ENCODE measurements at regions of chr17 and their contacts with region 1.

Region 1: GRCh38 chr17:18033442-18034099 is 5.4 kb downstream of the ATPAF2 start:
- DNase-seq: peak in 8 of 9 experiments; percentile 28 to 88 (median 56)
- ATAC-seq: peak; percentile 94
- H3K4me3 ChIP-seq: no peak overlapping the region
- H3K4me3 Mint-ChIP-seq: no peak overlapping the region
- H3K27ac ChIP-seq: no peak overlapping the region
- H3K27ac Mint-ChIP-seq: no peak overlapping the region
- H3K4me1 ChIP-seq: peaks cover 18% of the 10 kb centered on the region
- H3K4me1 Mint-ChIP-seq: peaks cover 28% of the 10 kb centered on the region
- H3K27me3 ChIP-seq: no peaks in the 10 kb centered on the region
- H3K27me3 Mint-ChIP-seq: no peaks in the 10 kb centered on the region
- CTCF ChIP-seq: peak; percentile 62

Region 2: GRCh38 chr17:17356149-17356930 is 677.2 kb before region 1 on chr17:
- CTCF ChIA-PET with region 1: no interaction called
- POLR2A ChIA-PET with region 1: no interaction called
- intact Hi-C with region 1: loop called (anchors 1 to 2 kb)
- DNase-seq: peak; percentile 41 to 83 (median 68)
- ATAC-seq: peak; percentile 89
- H3K4me3 ChIP-seq: no peak overlapping the region
- H3K4me3 Mint-ChIP-seq: no peak overlapping the region
- H3K27ac ChIP-seq: no peak overlapping the region
- H3K27ac Mint-ChIP-seq: no peak overlapping the region
- H3K4me1 ChIP-seq: no peaks in the 10 kb centered on the region
- H3K4me1 Mint-ChIP-seq: peaks cover 4% of the 10 kb centered on the region
- H3K27me3 ChIP-seq: no peaks in the 10 kb centered on the region
- H3K27me3 Mint-ChIP-seq: no peaks in the 10 kb centered on the region
- CTCF ChIP-seq: peak; percentile 99

Region 3: GRCh38 chr17:17681187-17681848 is 352.3 kb before region 1 on chr17 and contains the start of gene RAI1:
- CTCF ChIA-PET with region 1: interaction called, 17 read pairs
- POLR2A ChIA-PET with region 1: interaction called, 3 read pairs
- intact Hi-C with region 1: loop called (anchors 1 to 2 kb)
- DNase-seq: peak; percentile 51 to 89 (median 73)
- ATAC-seq: peak; percentile 58
- H3K4me3 ChIP-seq: peak within 1 kb of the TSS; percentile 74
- H3K4me3 Mint-ChIP-seq: peak within 1 kb of the TSS; percentile 93
- H3K27ac ChIP-seq: peak within 1 kb of the TSS; percentile 67 to 90
- H3K27ac Mint-ChIP-seq: peak within 1 kb of the TSS; percentile 77
- H3K4me1 ChIP-seq: peaks cover 34% of the 10 kb centered on the region
- H3K4me1 Mint-ChIP-seq: peaks cover 34% of the 10 kb centered on the region
- H3K27me3 ChIP-seq: no peaks in the 10 kb centered on the region
- H3K27me3 Mint-ChIP-seq: no peaks in the 10 kb centered on the region
- CTCF ChIP-seq: peak; percentile 50
- total RNA-seq, gene RAI1: 22.9 to 23.5 TPM

Region 4: GRCh38 chr17:17812211-17813057 is 221.1 kb before region 1 on chr17:
- CTCF ChIA-PET with region 1: interaction called, 9 read pairs
- POLR2A ChIA-PET with region 1: no interaction called
- intact Hi-C with region 1: loop called in 1 of 2 experiments (anchors 1 kb)
- DNase-seq: peak; percentile 52 to 87 (median 72)
- ATAC-seq: peak; percentile 74
- H3K4me3 ChIP-seq: no peak overlapping the region
- H3K4me3 Mint-ChIP-seq: no peak overlapping the region
- H3K27ac ChIP-seq: no peak overlapping the region
- H3K27ac Mint-ChIP-seq: no peak overlapping the region
- H3K4me1 ChIP-seq: peaks cover 14% of the 10 kb centered on the region
- H3K4me1 Mint-ChIP-seq: peaks cover 21% of the 10 kb centered on the region
- H3K27me3 ChIP-seq: no peaks in the 10 kb centered on the region
- H3K27me3 Mint-ChIP-seq: no peaks in the 10 kb centered on the region
- CTCF ChIP-seq: peak; percentile 98

Region 5: DNA sequence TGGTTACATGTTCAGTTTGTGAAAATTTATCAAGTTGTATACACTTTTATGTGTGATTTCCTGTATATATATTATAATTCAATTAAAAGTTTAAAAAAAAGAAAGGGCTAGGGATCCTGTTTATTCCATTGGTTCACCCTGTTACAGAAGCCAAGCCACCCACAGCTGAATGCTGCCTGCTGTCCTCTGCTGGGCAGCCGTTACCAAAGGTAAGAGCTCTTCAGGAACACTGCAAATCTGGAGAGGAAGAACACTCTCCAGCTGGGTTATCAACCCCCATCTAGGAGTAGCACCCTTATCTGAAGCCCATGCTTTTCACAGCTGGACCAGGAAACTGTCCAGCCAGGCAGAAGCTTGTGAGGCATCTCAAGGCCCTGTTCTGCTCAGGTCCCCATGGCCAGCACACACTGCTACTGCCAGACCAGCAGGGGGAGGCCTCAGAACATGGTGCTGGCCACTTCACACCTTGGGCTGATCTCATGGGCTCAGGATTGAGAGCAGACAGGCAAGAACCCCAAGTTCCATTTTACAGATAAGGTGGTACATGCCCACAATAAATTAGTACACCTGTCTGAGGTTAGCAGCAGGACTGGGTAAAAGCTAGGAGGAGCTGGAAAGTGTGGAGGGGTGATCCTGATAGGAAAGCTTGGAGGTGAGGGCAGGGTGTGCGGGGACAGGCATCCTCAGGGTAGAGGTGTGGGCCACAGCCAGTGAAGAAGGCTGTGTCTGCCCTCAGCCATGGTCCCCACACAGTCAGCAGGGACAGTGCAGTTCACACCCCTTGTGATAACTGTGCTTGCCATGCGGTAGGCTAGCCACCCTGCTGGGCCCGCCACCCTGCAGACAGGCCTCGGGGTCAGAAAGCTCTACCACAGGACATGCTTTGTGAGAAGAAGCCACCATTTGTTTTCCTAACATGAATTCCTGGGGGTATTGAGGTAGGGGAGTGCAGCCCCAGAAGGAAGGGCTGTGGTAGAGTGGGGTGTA is 142.5 kb before region 1 on chr17:
- CTCF ChIA-PET with region 1: interaction called, 18 read pairs
- POLR2A ChIA-PET with region 1: interaction called, 3 read pairs
- intact Hi-C with region 1: loop called (anchors 1 kb)
- DNase-seq: peak in 8 of 9 experiments; percentile 10 to 65 (median 42)
- ATAC-seq: peak; percentile 68
- H3K4me3 ChIP-seq: no peak overlapping the region
- H3K4me3 Mint-ChIP-seq: no peak overlapping the region
- H3K27ac ChIP-seq: no peak overlapping the region
- H3K27ac Mint-ChIP-seq: no peak overlapping the region
- H3K4me1 ChIP-seq: no peaks in the 10 kb centered on the region
- H3K4me1 Mint-ChIP-seq: peaks cover 16% of the 10 kb centered on the region
- H3K27me3 ChIP-seq: no peaks in the 10 kb centered on the region
- H3K27me3 Mint-ChIP-seq: no peaks in the 10 kb centered on the region
- CTCF ChIP-seq: peak; percentile 26

Region 6: DNA sequence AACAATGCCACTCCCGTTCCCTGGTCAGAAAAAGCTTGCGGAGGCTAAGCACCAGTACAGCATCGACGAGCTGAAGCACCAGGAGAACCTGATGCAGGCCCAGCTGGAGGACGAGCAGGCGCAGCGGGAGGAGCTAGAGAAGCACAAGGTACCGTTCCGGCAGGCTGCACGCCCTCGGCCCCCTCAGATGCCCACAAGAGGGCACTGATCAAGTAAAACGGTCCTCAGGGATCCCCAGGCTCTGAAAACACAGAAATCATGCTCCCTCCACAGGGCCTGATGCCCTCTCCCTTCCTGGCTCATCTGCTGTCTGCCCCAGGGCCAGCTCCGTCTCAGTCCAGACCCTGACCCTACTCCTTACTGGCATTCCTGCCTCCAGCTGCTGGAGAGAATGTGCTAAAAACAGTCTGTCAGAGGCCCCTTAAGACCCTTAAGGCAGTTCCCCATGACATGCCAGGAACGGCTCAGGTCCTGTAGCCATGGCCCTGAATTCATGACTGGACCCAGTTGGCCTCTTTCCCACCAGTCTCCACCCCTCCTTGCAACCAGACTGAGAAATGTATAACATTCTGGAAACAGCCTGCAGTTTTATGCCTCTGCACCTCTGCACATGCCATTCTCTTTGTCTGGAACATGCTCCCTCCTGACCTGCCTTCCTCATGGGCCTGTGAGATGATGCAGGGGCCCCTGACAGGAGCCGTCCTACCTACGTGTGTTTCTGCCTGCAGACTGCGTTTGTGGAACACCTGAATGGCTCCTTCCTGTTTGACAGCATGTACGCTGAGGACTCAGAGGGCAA is 39.1 kb before region 1 on chr17:
- CTCF ChIA-PET with region 1: interaction called, 4 read pairs
- POLR2A ChIA-PET with region 1: no interaction called
- intact Hi-C with region 1: loop called in 1 of 2 experiments (anchors 2 kb)
- DNase-seq: peak in 6 of 9 experiments; percentile 4 to 52 (median 30)
- ATAC-seq: peak; percentile 64
- H3K4me3 ChIP-seq: no peak overlapping the region
- H3K4me3 Mint-ChIP-seq: no peak overlapping the region
- H3K27ac ChIP-seq: no peak overlapping the region
- H3K27ac Mint-ChIP-seq: no peak overlapping the region
- H3K4me1 ChIP-seq: no peaks in the 10 kb centered on the region
- H3K4me1 Mint-ChIP-seq: no peaks in the 10 kb centered on the region
- H3K27me3 ChIP-seq: no peaks in the 10 kb centered on the region
- H3K27me3 Mint-ChIP-seq: no peaks in the 10 kb centered on the region
- CTCF ChIP-seq: peak; percentile 11

Measured in CD8-positive, alpha-beta T cell (primary cell).